ENCODE measurements at regions of chr11 and their contacts with region 1.

Region 1: GRCh38 chr11:9015677-9016076 is 11.9 kb upstream of the NRIP3 start:
- DNase-seq: peak; percentile 72
- ATAC-seq: peak; percentile 93
- H3K4me3 Mint-ChIP-seq: no peak overlapping the region
- H3K27ac Mint-ChIP-seq: no peak overlapping the region
- H3K4me1 Mint-ChIP-seq: peaks cover 19% of the 10 kb centered on the region
- H3K27me3 Mint-ChIP-seq: peaks cover 10% of the 10 kb centered on the region

Region 2: GRCh38 chr11:8989453-8989852 is 26.2 kb before region 1 on chr11:
- CTCF ChIA-PET with region 1: interaction called, 14 read pairs
- POLR2A ChIA-PET with region 1: no interaction called
- intact Hi-C with region 1: no loop called
- DNase-seq: no peak
- ATAC-seq: no peak
- H3K4me3 Mint-ChIP-seq: no peak overlapping the region
- H3K27ac Mint-ChIP-seq: no peak overlapping the region
- H3K4me1 Mint-ChIP-seq: no peaks in the 10 kb centered on the region
- H3K27me3 Mint-ChIP-seq: peaks cover 20% of the 10 kb centered on the region

Region 3: GRCh38 chr11:9003573-9004309 is 11.9 kb before region 1 on chr11 and contains the start of gene NRIP3:
- CTCF ChIA-PET with region 1: interaction called, 29 read pairs
- POLR2A ChIA-PET with region 1: no interaction called
- intact Hi-C with region 1: no loop called
- DNase-seq: peak; percentile 82
- ATAC-seq: peak; percentile 41
- H3K4me3 Mint-ChIP-seq: peak within 1 kb of the TSS; percentile 65
- H3K27ac Mint-ChIP-seq: peak within 1 kb of the TSS; percentile 38
- H3K4me1 Mint-ChIP-seq: peaks cover 27% of the 10 kb centered on the region
- H3K27me3 Mint-ChIP-seq: peaks cover 34% of the 10 kb centered on the region
- total RNA-seq, gene NRIP3: 2.1 to 2.2 TPM

Region 4: GRCh38 chr11:9060700-9061111 is 45.0 kb after region 1 on chr11:
- CTCF ChIA-PET with region 1: interaction called, 4 read pairs
- POLR2A ChIA-PET with region 1: no interaction called
- intact Hi-C with region 1: loop called in 1 of 2 experiments (anchors 1 kb)
- DNase-seq: peak; percentile 88
- ATAC-seq: peak; percentile 100
- H3K4me3 Mint-ChIP-seq: no peak overlapping the region
- H3K27ac Mint-ChIP-seq: peak overlapping the region; percentile 29
- H3K4me1 Mint-ChIP-seq: peaks cover 13% of the 10 kb centered on the region
- H3K27me3 Mint-ChIP-seq: peaks cover 25% of the 10 kb centered on the region

Region 5: DNA sequence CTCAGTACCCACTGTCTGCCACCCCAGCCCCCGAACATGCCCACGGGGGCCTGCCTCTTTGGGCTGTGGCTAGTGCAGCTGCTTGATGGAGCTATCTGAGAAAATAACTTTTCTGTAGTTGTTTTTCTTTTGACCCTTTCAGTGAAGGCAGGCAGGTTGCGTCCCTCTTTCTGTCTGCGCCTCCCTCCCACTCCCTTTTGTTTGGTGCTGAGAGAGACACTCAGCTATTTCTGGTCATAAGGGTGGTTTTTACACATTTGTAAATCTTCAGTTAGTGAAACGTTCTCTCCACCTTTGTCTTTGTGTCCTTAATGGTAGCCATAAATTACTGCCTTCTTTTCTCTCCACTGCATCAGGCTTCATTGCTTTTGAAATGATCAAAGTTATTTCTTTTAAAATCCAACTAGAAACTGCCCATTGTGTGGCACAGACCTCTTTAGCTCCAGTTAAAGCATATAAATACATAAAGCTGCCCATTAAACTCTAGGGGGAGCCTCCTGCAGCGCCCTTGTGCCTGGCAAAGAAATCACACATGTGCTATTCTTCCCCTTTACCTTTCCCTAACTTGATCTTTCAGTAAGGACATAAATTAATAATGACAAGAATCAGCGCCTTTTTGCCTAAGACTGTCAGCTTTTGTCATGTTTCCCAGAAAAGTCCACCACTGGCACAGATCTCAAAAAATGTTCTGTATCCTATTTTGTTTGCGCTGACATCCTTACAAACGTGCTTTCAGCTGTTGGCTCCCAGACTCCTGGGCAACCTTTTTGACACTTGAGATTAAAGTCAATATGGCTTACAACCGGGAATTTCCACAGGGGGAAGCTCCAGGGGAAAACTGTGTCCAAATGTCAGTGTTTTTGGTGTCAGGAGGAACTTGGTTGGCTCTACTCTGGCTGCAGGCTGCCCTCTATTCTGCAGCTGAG is 77.4 kb after region 1 on chr11:
- CTCF ChIA-PET with region 1: interaction called, 12 read pairs
- POLR2A ChIA-PET with region 1: no interaction called
- intact Hi-C with region 1: no loop called
- DNase-seq: no peak
- ATAC-seq: no peak
- H3K4me3 Mint-ChIP-seq: no peak overlapping the region
- H3K27ac Mint-ChIP-seq: no peak overlapping the region
- H3K4me1 Mint-ChIP-seq: no peaks in the 10 kb centered on the region
- H3K27me3 Mint-ChIP-seq: peaks cover 54% of the 10 kb centered on the region

Region 6: GRCh38 chr11:9104580-9104979 is 88.9 kb after region 1 on chr11:
- CTCF ChIA-PET with region 1: no interaction called
- POLR2A ChIA-PET with region 1: no interaction called
- intact Hi-C with region 1: no loop called
- DNase-seq: no peak
- ATAC-seq: no peak
- H3K4me3 Mint-ChIP-seq: no peak overlapping the region
- H3K27ac Mint-ChIP-seq: no peak overlapping the region
- H3K4me1 Mint-ChIP-seq: peaks cover 3% of the 10 kb centered on the region
- H3K27me3 Mint-ChIP-seq: peaks cover 13% of the 10 kb centered on the region

Measured in activated CD4-positive, alpha-beta T cell treated with anti-CD3 and anti-CD28 coated beads for 36 hours (primary cell).